AG04449 (cell line): ENCODE measurements at regions of chr5 and their contacts with region 1.

Region 1: DNA sequence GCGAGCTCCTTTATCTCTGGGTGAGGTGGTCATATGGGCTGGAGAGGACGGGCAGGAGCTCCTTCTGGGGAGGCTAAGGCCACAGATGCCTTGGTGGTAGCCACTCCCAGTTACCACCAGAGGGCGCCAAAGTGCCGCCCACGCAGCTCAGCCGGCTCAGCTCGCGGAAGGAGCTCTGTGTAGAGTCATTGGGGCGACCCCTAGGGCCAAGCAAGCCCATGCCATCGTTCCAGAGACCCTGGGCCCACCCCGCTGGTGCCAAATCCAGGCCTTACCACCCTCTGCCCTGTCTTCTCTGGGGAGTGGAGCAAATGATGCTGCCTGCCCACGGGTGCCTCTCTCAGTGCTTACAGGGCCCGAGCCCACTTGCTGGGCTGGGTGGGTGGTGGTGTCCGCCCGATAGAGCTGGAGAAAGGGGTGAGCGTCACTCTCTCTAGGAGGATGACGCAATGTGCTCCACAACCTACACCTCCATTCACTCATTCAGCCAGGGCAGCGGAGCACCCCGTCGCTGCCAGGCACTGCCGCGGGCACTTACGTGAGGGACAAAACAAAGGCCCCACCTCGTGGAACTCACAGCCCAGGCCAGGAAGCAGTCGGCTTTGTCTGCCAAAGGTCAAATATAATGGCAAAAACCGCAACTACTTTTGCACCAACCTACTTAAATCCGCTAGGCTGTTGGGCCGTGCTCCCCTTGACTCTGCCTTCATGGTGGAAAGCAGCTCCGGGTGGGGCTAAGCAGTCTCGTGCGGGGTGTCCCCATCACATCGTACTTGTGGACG is 13.8 kb downstream of the TSPAN17 start:
- DNase-seq: no peak
- H3K4me3 ChIP-seq: no peak overlapping the region
- CTCF ChIP-seq: peak; percentile 97

Region 2: DNA sequence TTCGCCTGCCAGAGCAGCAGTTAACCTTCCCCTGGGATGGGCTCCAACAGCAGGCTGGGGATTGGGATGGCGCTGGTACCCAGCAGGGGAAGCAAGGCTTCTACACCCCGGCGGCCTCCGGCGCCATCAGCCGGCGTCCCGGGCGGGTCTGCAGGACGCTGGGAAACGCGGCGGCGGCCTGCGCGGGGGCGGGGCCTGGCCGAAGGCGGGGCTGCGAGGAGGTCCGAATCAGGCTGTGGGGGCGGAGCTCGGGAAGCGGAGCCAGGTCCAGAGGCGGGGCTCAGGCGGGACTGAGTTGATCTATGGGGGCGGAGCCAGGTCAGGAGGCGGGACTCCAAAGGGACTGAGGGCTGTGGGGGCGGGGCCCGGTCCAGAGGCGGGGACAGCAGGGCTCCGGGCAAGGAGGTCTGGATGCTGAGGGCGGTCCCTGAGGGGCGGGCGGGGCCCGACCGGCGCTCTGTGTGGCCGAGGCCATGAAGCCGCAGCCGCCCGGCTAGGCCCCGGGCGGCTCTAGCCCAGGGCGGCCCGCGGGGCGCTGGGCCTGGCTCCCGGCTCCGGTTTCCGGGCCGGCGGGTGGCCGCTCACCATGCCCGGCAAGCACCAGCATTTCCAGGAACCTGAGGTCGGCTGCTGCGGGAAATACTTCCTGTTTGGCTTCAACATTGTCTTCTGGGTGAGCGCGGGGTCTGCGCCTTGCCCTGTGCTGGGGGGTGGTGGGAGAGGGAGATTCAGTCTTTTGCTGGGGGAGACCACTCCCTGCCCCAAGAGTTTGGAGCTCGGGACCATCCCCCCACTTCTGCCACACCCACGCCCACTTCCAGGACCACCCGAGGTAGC is 13.8 kb before region 1 on chr5 and contains the start of gene TSPAN17:
- CTCF ChIA-PET with region 1: interaction called, 190 read pairs
- POLR2A ChIA-PET with region 1: interaction called, 5 read pairs
- DNase-seq: peak; percentile 84
- H3K4me3 ChIP-seq: peak within 1 kb of the TSS; percentile 81
- CTCF ChIP-seq: peak; percentile 46

Region 3: DNA sequence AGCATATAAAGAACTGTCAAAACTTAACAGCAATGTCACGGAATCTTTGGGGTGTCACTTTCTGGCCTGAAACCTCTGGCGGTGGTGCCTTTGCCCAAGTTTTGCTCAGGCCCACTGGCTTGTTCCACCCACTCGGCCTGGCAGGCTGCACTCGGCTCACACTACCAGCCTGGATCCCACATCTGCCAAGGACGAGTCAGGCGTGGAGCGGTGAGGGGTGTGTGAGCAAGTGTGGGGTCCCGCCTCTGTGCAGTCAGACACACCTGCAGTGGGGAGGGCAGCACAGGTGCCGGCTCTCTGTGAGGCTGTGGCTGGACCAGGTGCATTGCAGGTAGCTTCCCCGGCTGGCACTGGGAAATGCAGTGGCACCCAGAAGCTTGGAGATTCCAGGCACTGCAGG is 26.2 kb after region 1 on chr5:
- CTCF ChIA-PET with region 1: interaction called, 24 read pairs
- POLR2A ChIA-PET with region 1: no interaction called
- DNase-seq: no peak
- H3K4me3 ChIP-seq: no peak overlapping the region
- CTCF ChIP-seq: no peak

Region 4: GRCh38 chr5:176901260-176902101 is 240.4 kb after region 1 on chr5:
- CTCF ChIA-PET with region 1: interaction called, 23 read pairs
- POLR2A ChIA-PET with region 1: no interaction called
- DNase-seq: no peak
- H3K4me3 ChIP-seq: no peak overlapping the region
- CTCF ChIP-seq: no peak

Region 5: GRCh38 chr5:176948458-176948857 is 287.4 kb after region 1 on chr5:
- CTCF ChIA-PET with region 1: interaction called, 10 read pairs
- POLR2A ChIA-PET with region 1: no interaction called
- DNase-seq: no peak
- H3K4me3 ChIP-seq: no peak overlapping the region
- CTCF ChIP-seq: no peak

Region 6: GRCh38 chr5:177071666-177072385 is 410.8 kb after region 1 on chr5:
- CTCF ChIA-PET with region 1: interaction called, 22 read pairs
- POLR2A ChIA-PET with region 1: no interaction called
- DNase-seq: peak; percentile 42
- H3K4me3 ChIP-seq: peak overlapping the region; percentile 30; the same call in 1 of the 2 replicates
- CTCF ChIP-seq: peak; percentile 72

Region 7: DNA sequence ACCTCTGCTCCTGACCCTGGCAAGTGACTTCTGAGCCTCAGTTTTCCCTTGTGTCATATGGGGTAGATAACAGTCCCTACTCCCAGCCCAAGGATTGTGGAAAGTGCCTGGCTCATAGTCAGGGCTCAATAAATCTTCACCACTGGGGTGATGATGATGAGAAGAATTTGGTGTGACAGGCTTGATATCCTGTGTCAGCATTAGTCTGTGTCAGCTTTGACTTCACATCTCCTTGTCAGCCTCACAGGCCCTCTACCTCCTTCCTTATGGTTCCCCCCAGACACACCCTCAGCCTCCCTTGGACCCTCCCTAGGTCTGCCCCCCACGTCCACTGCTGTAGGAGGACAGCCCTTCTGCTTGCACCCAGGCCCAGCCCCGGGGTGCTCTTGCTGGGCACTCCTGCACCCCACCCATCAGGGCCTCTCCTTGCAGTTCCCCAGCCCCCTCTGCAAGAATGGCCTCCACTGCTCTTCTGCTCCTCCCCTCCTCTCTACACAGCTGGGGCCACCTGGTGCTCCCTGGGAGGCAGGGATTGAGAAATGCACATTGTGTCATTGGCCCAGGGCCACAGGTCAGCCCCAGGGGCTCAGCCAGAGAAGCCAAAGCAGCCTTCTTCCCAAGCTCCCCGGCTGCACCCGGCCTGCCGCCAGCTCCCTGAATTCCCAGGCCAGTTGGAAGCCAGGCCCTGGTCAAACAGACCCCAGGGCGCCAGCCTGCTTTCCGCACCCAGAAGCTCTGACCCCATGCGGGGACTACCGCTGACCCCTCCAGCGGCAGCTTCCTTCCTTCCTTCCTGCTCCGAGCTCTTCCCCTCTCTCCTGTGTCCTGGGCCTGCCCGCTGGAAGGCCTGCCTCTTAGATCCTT is 433.4 kb after region 1 on chr5:
- CTCF ChIA-PET with region 1: interaction called, 11 read pairs
- POLR2A ChIA-PET with region 1: no interaction called
- DNase-seq: no peak
- H3K4me3 ChIP-seq: no peak overlapping the region
- CTCF ChIP-seq: no peak